ENCODE measurements at regions of chr1 and their contacts with region 1.

Region 1: GRCh38 chr1:108125312-108126138 is 74.6 kb downstream of the SLC25A24 start:
- DNase-seq: peak; percentile 78
- ATAC-seq: peak; percentile 92
- H3K4me3 Mint-ChIP-seq: no peak overlapping the region
- H3K27ac Mint-ChIP-seq: no peak overlapping the region
- H3K4me1 Mint-ChIP-seq: peaks cover 2% of the 10 kb centered on the region
- H3K27me3 Mint-ChIP-seq: no peaks in the 10 kb centered on the region

Region 2: GRCh38 chr1:107795994-107796393 is 329.5 kb before region 1 on chr1:
- CTCF ChIA-PET with region 1: interaction called, 22 read pairs
- POLR2A ChIA-PET with region 1: no interaction called
- DNase-seq: no peak
- ATAC-seq: no peak
- H3K4me3 Mint-ChIP-seq: no peak overlapping the region
- H3K27ac Mint-ChIP-seq: no peak overlapping the region
- H3K4me1 Mint-ChIP-seq: peaks cover 12% of the 10 kb centered on the region
- H3K27me3 Mint-ChIP-seq: no peaks in the 10 kb centered on the region

Region 3: DNA sequence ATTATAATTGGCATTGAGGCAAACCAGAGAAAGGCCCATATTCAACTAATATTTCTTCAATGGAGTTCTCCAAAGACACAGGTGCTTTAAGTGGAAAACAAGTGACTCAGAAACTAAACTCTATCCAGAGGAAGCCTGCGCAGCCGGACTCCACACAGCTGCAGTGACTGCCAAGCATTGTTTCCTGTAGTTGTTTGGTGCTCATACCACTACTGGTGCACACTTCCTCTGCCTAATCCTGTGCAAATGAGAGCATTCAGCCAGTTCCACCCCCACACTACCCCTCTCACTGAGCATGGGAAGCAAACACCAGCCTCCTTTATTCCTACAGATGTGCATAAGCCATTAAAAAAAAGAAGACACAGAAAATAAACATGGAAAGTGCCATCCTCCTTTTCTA is 263.5 kb before region 1 on chr1:
- CTCF ChIA-PET with region 1: no interaction called
- POLR2A ChIA-PET with region 1: no interaction called
- DNase-seq: no peak
- ATAC-seq: peak; percentile 42
- H3K4me3 Mint-ChIP-seq: no peak overlapping the region
- H3K27ac Mint-ChIP-seq: peak overlapping the region; percentile 23
- H3K4me1 Mint-ChIP-seq: peaks cover 28% of the 10 kb centered on the region
- H3K27me3 Mint-ChIP-seq: no peaks in the 10 kb centered on the region

Region 4: GRCh38 chr1:107926436-107927080 is 199.0 kb before region 1 on chr1:
- CTCF ChIA-PET with region 1: no interaction called
- POLR2A ChIA-PET with region 1: no interaction called
- DNase-seq: no peak
- ATAC-seq: no peak
- H3K4me3 Mint-ChIP-seq: no peak overlapping the region
- H3K27ac Mint-ChIP-seq: no peak overlapping the region
- H3K4me1 Mint-ChIP-seq: peaks cover 13% of the 10 kb centered on the region
- H3K27me3 Mint-ChIP-seq: no peaks in the 10 kb centered on the region

Region 5: GRCh38 chr1:107963601-107964335 is 161.8 kb before region 1 on chr1:
- CTCF ChIA-PET with region 1: interaction called, 34 read pairs
- POLR2A ChIA-PET with region 1: no interaction called
- DNase-seq: peak; percentile 58
- ATAC-seq: peak; percentile 61
- H3K4me3 Mint-ChIP-seq: peak overlapping the region; percentile 86
- H3K27ac Mint-ChIP-seq: peak overlapping the region; percentile 91
- H3K4me1 Mint-ChIP-seq: peaks cover 25% of the 10 kb centered on the region
- H3K27me3 Mint-ChIP-seq: peaks cover 3% of the 10 kb centered on the region

Region 6: GRCh38 chr1:108049178-108049819 is 76.2 kb before region 1 on chr1:
- CTCF ChIA-PET with region 1: interaction called, 10 read pairs
- POLR2A ChIA-PET with region 1: no interaction called
- DNase-seq: peak; percentile 33
- ATAC-seq: peak; percentile 40
- H3K4me3 Mint-ChIP-seq: no peak overlapping the region
- H3K27ac Mint-ChIP-seq: no peak overlapping the region
- H3K4me1 Mint-ChIP-seq: peaks cover 9% of the 10 kb centered on the region
- H3K27me3 Mint-ChIP-seq: peaks cover 4% of the 10 kb centered on the region

Measured in activated CD8-positive, alpha-beta T cell treated with anti-CD3 and anti-CD28 coated beads, Interleukin-2, amount 10 ng/mL, durations not matched to agents 7 days and 5 days (primary cell).